ENCODE measurements at regions of chr22 and their contacts with region 1.

Region 1: GRCh38 chr22:31661851-31662656 is at the start of gene PISD:
- DNase-seq: no peak
- H3K4me3 ChIP-seq: peak within 1 kb of the TSS; percentile 98
- CTCF ChIP-seq: no peak

Region 2: GRCh38 chr22:31676700-31677099 is 14.6 kb after region 1 on chr22:
- CTCF ChIA-PET with region 1: interaction called, 133 read pairs
- POLR2A ChIA-PET with region 1: interaction called, 3 read pairs
- DNase-seq: no peak
- H3K4me3 ChIP-seq: peak overlapping the region; percentile 49
- CTCF ChIP-seq: no peak

Region 3: DNA sequence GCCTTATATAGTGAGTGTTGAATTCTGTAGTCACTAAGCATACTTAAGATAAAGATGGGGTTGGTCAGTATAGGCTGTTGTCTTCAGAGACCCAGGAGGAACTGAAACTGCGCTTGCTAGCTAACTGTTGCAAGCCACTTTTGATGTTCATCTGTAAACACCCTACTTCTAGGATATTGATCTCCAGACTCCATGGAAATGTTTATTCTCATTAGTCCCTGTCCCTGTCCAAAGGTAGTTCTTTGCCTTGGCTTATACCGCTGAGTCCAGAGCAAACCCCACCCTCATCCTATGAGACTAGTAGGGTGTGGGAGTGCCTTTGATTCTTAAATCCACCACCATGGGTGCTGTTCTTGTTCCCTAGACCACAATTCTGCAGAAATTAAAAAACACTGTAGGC is 128.2 kb after region 1 on chr22:
- CTCF ChIA-PET with region 1: interaction called, 12 read pairs
- POLR2A ChIA-PET with region 1: no interaction called
- DNase-seq: no peak
- H3K4me3 ChIP-seq: no peak overlapping the region
- CTCF ChIP-seq: no peak

Region 4: GRCh38 chr22:31952459-31952858 is 290.4 kb after region 1 on chr22:
- CTCF ChIA-PET with region 1: interaction called, 20 read pairs
- POLR2A ChIA-PET with region 1: no interaction called
- DNase-seq: peak; percentile 67
- H3K4me3 ChIP-seq: no peak overlapping the region
- CTCF ChIP-seq: no peak

Region 5: GRCh38 chr22:31970490-31971444 is 308.7 kb after region 1 on chr22:
- CTCF ChIA-PET with region 1: interaction called, 80 read pairs
- POLR2A ChIA-PET with region 1: no interaction called
- DNase-seq: no peak
- H3K4me3 ChIP-seq: peak overlapping the region; percentile 61
- CTCF ChIP-seq: peak; percentile 98